ENCODE measurements at regions of chr14 and their contacts with region 1.

Region 1: GRCh38 chr14:74018586-74019407 is at the starts of genes BBOF1 and ENTPD5:
- DNase-seq: peak; percentile 80
- H3K4me3 Mint-ChIP-seq: peak within 1 kb of the TSS; percentile 86
- H3K27ac Mint-ChIP-seq: peak within 1 kb of the TSS; percentile 90
- H3K4me1 Mint-ChIP-seq: peaks cover 13% of the 10 kb centered on the region
- H3K27me3 Mint-ChIP-seq: no peaks in the 10 kb centered on the region
- total RNA-seq, gene BBOF1: 1.3 to 1.7 TPM
- total RNA-seq, gene ENTPD5: 7.3 to 9.6 TPM

Region 2: DNA sequence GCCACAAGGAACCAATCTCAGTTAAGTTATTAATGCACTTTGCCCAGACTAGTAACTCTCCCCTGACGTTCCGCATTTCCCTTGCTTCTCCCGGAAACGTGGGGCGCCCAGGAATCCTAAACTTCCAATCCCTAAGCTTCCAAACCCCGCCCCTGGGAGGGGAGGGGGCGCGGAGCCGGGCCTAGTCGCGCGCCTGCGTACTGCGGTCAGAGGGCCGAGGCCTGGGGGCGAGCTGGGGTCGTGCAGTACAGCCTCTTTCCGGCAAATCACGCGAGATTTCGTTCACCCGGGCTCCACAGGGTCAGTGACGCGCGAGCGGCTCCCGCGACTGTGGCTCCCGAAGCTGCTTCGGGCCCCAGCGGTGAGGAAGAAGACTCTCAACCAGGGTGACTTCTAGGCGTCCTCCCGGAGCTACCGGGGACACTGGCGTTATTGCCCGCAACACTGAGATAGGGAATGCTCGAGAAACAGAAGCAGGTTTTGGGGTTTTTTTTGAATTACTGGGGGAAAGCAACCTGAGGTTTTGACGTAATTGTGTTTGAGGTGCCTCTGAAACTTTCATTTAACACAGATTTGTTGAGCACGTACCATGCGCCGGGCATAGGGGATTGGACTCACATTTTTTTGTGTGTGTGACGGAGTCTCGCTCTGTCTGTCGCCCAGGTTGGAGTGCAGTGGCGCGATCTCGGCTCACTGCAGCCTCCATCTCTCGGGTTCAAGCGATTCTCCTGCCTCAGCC is 167.0 kb before region 1 on chr14 and contains the start of gene PTGR2:
- CTCF ChIA-PET with region 1: interaction called, 3 read pairs
- intact Hi-C with region 1: loop called (anchors 5 kb)
- DNase-seq: peak; percentile 91
- H3K4me3 Mint-ChIP-seq: peak within 1 kb of the TSS; percentile 92
- H3K27ac Mint-ChIP-seq: peak within 1 kb of the TSS; percentile 96
- H3K4me1 Mint-ChIP-seq: peaks cover 20% of the 10 kb centered on the region
- H3K27me3 Mint-ChIP-seq: no peaks in the 10 kb centered on the region
- total RNA-seq, gene PTGR2: 10.7 to 14.1 TPM

Region 3: GRCh38 chr14:73886449-73887317 is 132.1 kb before region 1 on chr14 and contains the start of gene ZNF410:
- CTCF ChIA-PET with region 1: no interaction called
- intact Hi-C with region 1: loop called (anchors 5 kb)
- DNase-seq: peak; percentile 95
- H3K4me3 Mint-ChIP-seq: peak within 1 kb of the TSS; percentile 88
- H3K27ac Mint-ChIP-seq: peak within 1 kb of the TSS; percentile 94
- H3K4me1 Mint-ChIP-seq: peaks cover 46% of the 10 kb centered on the region
- H3K27me3 Mint-ChIP-seq: no peaks in the 10 kb centered on the region
- total RNA-seq, gene ZNF410: 51.0 to 56.8 TPM

Region 4: DNA sequence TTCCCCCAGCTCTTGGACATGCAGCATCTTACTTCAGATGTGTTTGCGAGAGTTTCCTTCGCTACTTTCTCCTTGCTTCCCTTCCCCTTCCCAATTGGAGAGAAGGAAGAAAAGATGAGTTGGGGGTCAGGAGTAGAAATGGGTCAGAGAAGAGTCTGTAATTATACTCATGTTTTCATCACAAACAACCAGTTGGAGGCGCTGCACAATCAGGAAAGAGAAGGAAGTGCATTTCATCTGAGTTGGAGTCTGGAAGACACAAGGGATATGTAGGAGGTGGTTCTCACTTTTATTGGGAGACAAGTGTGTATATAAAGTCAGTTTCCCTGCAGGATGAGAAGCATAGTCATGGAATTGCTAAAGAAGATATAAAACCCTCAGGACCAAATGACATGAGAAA is 189.2 kb after region 1 on chr14:
- CTCF ChIA-PET with region 1: no interaction called
- intact Hi-C with region 1: no loop called
- DNase-seq: no peak
- H3K4me3 Mint-ChIP-seq: no peak overlapping the region
- H3K27ac Mint-ChIP-seq: no peak overlapping the region
- H3K4me1 Mint-ChIP-seq: no peaks in the 10 kb centered on the region
- H3K27me3 Mint-ChIP-seq: peaks cover 2% of the 10 kb centered on the region

Region 5: GRCh38 chr14:74249433-74250375 is 230.9 kb after region 1 on chr14:
- CTCF ChIA-PET with region 1: no interaction called
- intact Hi-C with region 1: loop called (anchors 5 kb)
- DNase-seq: no peak
- H3K4me3 Mint-ChIP-seq: no peak overlapping the region
- H3K27ac Mint-ChIP-seq: no peak overlapping the region
- H3K4me1 Mint-ChIP-seq: peaks cover 6% of the 10 kb centered on the region
- H3K27me3 Mint-ChIP-seq: peaks cover 26% of the 10 kb centered on the region